Mammary epithelial cell (primary cell): ENCODE measurements at regions of chr20 and their contacts with region 1.

Region 1: GRCh38 chr20:21571841-21572690 is 58.2 kb upstream of the NKX2-2 start:
- DNase-seq: no peak
- H3K4me3 ChIP-seq: no peak overlapping the region
- H3K27ac ChIP-seq: no peak overlapping the region
- H3K4me1 ChIP-seq: peaks cover 4% of the 10 kb centered on the region
- H3K27me3 ChIP-seq: no peaks in the 10 kb centered on the region
- CTCF ChIP-seq: peak; percentile 76 to 77

Region 2: GRCh38 chr20:20837574-20838021 is 734.5 kb before region 1 on chr20:
- CTCF ChIA-PET with region 1: no interaction called
- dilution Hi-C with region 1: no loop called
- in situ Hi-C with region 1: no loop called
- intact Hi-C with region 1: loop called (anchors 5 kb)
- DNase-seq: no peak
- H3K4me3 ChIP-seq: no peak overlapping the region
- H3K27ac ChIP-seq: no peak overlapping the region
- H3K4me1 ChIP-seq: no peaks in the 10 kb centered on the region
- H3K27me3 ChIP-seq: peaks cover 2% of the 10 kb centered on the region
- CTCF ChIP-seq: peak; percentile 58 to 63

Region 3: GRCh38 chr20:21529863-21530262 is 42.2 kb before region 1 on chr20:
- CTCF ChIA-PET with region 1: no interaction called
- dilution Hi-C with region 1: no loop called
- in situ Hi-C with region 1: no loop called
- intact Hi-C with region 1: loop called (anchors 1 kb)
- DNase-seq: no peak
- H3K4me3 ChIP-seq: no peak overlapping the region
- H3K27ac ChIP-seq: no peak overlapping the region
- H3K4me1 ChIP-seq: no peaks in the 10 kb centered on the region
- H3K27me3 ChIP-seq: peaks cover 3% of the 10 kb centered on the region
- CTCF ChIP-seq: peak; percentile 23 to 55